A673 (cell line): ENCODE measurements at regions of chr6 and their contacts with region 1.

Region 1: DNA sequence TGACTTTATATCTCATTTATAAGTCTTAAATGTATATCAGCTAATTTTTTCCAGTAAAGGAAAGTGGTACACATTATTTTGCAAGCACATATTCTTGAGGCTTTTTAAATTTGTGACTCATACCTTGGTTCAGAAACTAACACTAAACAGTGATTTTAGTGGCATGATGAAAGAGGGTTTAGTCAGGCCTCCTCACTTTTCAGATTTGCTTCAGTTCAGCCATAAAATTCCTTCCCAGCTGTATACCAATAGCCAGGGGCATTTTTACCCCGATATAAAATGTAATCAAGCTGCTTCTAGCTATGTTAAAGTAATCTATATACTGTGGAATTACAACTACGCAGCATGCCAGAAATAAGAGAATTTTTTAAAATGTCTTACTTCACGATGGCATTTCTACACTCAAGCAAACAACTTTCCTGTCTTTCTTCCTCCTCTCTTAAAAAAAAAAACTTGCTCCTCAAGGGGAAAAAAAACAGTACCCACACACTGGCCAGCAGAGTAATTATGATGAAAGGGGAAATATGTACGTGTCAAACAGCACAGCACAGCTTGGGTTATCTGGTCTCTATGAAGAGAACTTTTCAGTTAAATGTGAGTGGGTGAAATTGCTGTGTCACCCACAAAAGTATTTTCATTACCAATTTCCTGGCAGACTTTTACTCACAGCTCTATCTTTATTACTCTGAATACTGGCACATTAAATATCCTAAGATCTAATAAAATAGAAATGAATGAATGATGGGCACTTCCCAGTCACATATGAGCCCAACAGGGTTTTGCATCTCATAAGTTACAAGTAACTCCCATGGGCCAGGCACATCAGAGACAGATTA is 244.8 kb upstream of the TENT5A start:
- DNase-seq: peak; percentile 87
- H3K4me3 ChIP-seq: no peak overlapping the region
- H3K27ac ChIP-seq: peak overlapping the region; percentile 81
- H3K4me1 ChIP-seq: peaks cover 37% of the 10 kb centered on the region
- H3K27me3 ChIP-seq: no peaks in the 10 kb centered on the region
- CTCF ChIP-seq: no peak

Region 2: DNA sequence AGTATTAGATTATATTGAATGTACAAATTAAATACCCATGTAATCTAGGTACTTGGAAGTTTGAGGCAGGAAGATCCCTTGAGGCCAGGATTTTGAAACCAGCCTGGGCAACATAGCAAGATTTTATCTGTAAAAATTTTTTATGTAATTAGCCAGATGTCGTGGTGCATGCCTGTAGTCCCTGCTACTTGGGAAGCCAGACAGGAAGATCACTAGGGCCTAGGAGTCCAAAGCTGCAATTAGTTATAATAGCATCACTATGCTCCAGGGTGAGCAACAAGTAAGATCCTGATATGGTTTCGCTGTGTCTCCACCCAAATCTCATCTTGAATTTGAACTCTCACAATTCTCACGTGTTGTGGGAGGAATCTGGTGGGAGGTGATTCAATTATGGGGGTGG is 780.7 kb before region 1 on chr6:
- CTCF ChIA-PET with region 1: no interaction called
- POLR2A ChIA-PET with region 1: interaction called, 10 read pairs
- intact Hi-C with region 1: no loop called
- DNase-seq: peak; percentile 2
- H3K4me3 ChIP-seq: no peak overlapping the region
- H3K27ac ChIP-seq: no peak overlapping the region
- H3K4me1 ChIP-seq: no peaks in the 10 kb centered on the region
- H3K27me3 ChIP-seq: no peaks in the 10 kb centered on the region
- CTCF ChIP-seq: no peak